ENCODE measurements at regions of chr20 and their contacts with region 1.

Region 1: GRCh38 chr20:13953227-13953626 is 37.2 kb downstream of the SEL1L2 start:
- DNase-seq: no peak
- H3K4me3 ChIP-seq: no peak overlapping the region
- H3K27ac ChIP-seq: no peak overlapping the region
- H3K4me1 ChIP-seq: no peaks in the 10 kb centered on the region
- H3K27me3 ChIP-seq: no peaks in the 10 kb centered on the region
- CTCF ChIP-seq: peak; percentile 36; the same call in 1 of the 2 replicates

Region 2: GRCh38 chr20:13915284-13915683 is 37.9 kb before region 1 on chr20:
- CTCF ChIA-PET with region 1: interaction called, 14 read pairs
- POLR2A ChIA-PET with region 1: no interaction called
- intact Hi-C with region 1: no loop called
- DNase-seq: no peak
- H3K4me3 ChIP-seq: no peak overlapping the region
- H3K27ac ChIP-seq: no peak overlapping the region
- H3K4me1 ChIP-seq: 0 out of 2 replicates have a peak, but pooled peaks cover 5% of the 10 kb centered on the region
- H3K27me3 ChIP-seq: no peaks in the 10 kb centered on the region
- CTCF ChIP-seq: no peak

Region 3: GRCh38 chr20:13984211-13984610 is 31.0 kb after region 1 on chr20:
- CTCF ChIA-PET with region 1: no interaction called
- POLR2A ChIA-PET with region 1: no interaction called
- intact Hi-C with region 1: no loop called
- DNase-seq: peak; percentile 25 to 73
- H3K4me3 ChIP-seq: no peak overlapping the region
- H3K27ac ChIP-seq: peak overlapping the region; percentile 71
- H3K4me1 ChIP-seq: peaks cover 8% of the 10 kb centered on the region; the same call in 1 of the 2 replicates
- H3K27me3 ChIP-seq: no peaks in the 10 kb centered on the region
- CTCF ChIP-seq: no peak

Region 4: GRCh38 chr20:14055127-14055742 is 102.0 kb after region 1 on chr20:
- CTCF ChIA-PET with region 1: no interaction called
- POLR2A ChIA-PET with region 1: no interaction called
- intact Hi-C with region 1: no loop called
- DNase-seq: peak in 1 of 2 experiments; percentile 15
- H3K4me3 ChIP-seq: no peak overlapping the region
- H3K27ac ChIP-seq: no peak overlapping the region
- H3K4me1 ChIP-seq: no peaks in the 10 kb centered on the region
- H3K27me3 ChIP-seq: no peaks in the 10 kb centered on the region
- CTCF ChIP-seq: peak; percentile 72